ENCODE measurements at regions of chr16 and their contacts with region 1.

Region 1: DNA sequence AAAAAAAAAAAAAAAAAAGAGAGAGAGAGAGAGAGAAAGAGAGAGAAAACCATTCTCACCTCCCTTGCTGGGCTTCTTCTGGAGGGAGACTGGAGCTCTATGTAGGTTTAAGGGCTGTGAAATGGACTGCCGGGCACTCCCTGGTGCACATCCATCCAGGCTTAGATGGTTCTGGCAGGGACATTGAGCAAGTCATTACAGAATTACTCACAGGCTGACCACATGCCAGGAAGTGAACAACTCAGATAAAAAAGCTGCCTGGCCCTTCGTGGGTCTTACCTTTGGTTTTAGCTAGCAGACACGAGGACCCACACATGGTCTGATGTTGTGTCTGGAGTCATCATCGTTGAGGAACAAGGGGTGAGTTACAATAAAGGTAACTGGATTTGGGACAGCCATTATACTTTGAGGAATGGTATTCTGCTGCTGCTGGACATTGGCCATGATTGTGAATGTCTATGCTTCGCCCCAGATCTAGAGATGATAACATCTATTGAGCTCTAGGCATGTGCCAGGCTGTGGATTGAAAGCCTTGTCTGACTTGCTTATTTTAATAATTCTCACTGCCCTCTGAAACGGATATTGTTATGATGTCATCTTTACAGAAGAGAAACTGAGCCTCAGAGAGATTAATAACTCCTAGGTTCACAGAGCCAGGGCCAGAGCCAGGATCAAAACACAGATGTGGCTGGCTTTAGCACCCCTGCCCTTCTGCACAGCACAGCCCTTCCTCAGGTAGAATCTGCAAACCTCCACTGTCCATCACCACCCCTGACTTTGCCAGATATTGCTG is 847.6 kb upstream of the EEF2KMT start:
- DNase-seq: no peak
- H3K4me3 ChIP-seq: no peak overlapping the region
- H3K27ac ChIP-seq: no peak overlapping the region
- H3K4me1 ChIP-seq: no peaks in the 10 kb centered on the region
- H3K27me3 ChIP-seq: no peaks in the 10 kb centered on the region
- CTCF ChIP-seq: no peak
- POLR2A ChIP-seq: no peak

Region 2: GRCh38 chr16:5874899-5875298 is 70.3 kb before region 1 on chr16:
- intact Hi-C with region 1: loop called (anchors 2 kb)
- DNase-seq: no peak
- H3K4me3 ChIP-seq: no peak overlapping the region
- H3K27ac ChIP-seq: no peak overlapping the region
- H3K4me1 ChIP-seq: no peaks in the 10 kb centered on the region
- H3K27me3 ChIP-seq: no peaks in the 10 kb centered on the region
- CTCF ChIP-seq: no peak
- POLR2A ChIP-seq: no peak

Region 3: DNA sequence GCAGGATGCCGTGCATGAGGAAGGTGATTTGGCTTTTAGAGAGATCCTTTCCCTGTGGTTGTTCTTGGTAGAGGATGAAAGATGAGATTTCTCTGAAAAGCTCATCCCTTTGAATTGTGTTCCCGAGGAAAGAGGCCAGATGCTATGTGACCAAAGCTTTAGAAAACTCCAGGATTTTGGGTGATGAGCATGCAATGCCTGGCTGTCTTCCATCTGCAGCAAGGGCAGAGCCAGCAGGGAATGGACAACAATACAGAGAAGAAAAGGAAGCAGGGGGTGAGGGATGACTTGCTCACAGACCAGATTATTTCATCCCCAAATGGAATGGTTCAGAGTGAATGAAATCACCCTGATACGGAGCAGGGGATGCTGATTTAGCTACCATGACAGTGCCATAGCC is 102.2 kb after region 1 on chr16:
- intact Hi-C with region 1: no loop called
- DNase-seq: no peak
- H3K4me3 ChIP-seq: no peak overlapping the region
- H3K27ac ChIP-seq: no peak overlapping the region
- H3K4me1 ChIP-seq: no peaks in the 10 kb centered on the region
- H3K27me3 ChIP-seq: no peaks in the 10 kb centered on the region
- CTCF ChIP-seq: no peak
- POLR2A ChIP-seq: no peak